Tibial artery (tissue), 4 donors: ENCODE measurements at regions of chr11 and their contacts with region 1.

Region 1: DNA sequence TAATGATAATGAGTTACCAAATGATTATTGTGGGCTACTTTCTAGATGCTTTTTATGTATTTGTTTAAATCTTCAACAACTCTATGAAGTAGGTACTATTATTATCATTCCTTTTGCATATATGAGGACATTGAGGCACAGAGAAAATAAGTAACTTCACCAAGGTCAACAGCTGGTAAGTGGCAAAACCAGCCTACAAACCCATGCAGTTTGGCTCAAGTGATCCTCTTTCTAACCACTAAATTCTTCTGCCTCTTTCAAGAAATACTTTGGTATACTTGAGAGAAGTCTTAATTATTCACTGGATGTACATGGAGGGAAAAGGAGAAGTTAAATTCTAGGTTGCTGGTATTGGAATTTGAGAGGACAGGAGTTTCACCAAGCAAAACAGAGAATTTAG is 495.2 kb upstream of the CADM1 start:
- DNase-seq: no peak
- H3K4me3 ChIP-seq: no peak overlapping the region
- H3K27ac ChIP-seq: no peak overlapping the region
- H3K4me1 ChIP-seq: no peaks in the 10 kb centered on the region
- H3K27me3 ChIP-seq: no peaks in the 10 kb centered on the region
- CTCF ChIP-seq: no peak

Region 2: DNA sequence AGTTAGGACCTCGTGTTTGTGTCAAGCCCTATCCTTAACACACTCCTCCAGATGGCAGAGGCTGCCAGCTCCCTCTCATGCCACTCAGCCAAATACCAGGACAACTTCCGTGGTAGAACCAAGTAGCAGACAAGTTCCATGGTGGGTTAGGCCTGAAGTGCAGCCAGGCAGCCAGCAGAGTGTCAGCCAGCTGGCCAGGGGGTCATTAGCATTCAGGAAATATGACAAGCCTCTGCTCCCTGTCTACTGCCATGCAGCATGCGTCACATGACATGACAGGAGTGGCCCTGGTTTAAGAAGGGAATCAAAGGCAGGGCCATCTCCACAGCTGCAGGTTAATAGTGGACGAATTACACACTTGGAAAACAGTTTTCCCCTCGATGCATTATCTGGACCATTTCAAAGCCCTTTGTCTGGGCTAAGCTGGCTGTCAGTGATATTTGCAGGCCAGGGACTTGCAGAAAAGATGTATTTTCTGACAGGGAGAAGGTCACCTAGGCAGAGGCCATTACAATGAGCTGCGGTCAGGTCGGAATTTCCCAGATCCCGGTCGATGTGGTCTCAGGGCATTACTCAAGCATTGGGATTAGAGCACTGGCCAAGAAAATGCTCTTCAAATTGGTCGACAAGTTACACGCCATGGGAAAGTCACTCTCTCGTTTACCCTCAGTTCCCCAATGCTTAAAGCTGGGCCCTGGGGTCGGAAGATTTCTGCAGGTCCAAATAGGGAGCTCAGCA is 33.5 kb before region 1 on chr11:
- intact Hi-C with region 1: loop called (anchors 1 kb)
- DNase-seq: no peak
- H3K4me3 ChIP-seq: no peak overlapping the region
- H3K27ac ChIP-seq: no peak overlapping the region
- H3K4me1 ChIP-seq: no peaks in the 10 kb centered on the region
- H3K27me3 ChIP-seq: no peaks in the 10 kb centered on the region
- CTCF ChIP-seq: no peak